Activated CD8-positive, alpha-beta T cell treated with anti-CD3 and anti-CD28 coated beads, Interleukin-2, amount 10 ng/mL, durations not matched to agents 7 days and 5 days (primary cell): ENCODE measurements at regions of chr15 and their contacts with region 1.

Region 1: GRCh38 chr15:89874926-89875564 is 18.7 kb downstream of the AP3S2 start:
- DNase-seq: peak; percentile 88
- ATAC-seq: peak; percentile 100
- H3K4me3 Mint-ChIP-seq: no peak overlapping the region
- H3K27ac Mint-ChIP-seq: peak overlapping the region; percentile 52
- H3K4me1 Mint-ChIP-seq: peaks cover 6% of the 10 kb centered on the region
- H3K27me3 Mint-ChIP-seq: no peaks in the 10 kb centered on the region

Region 2: GRCh38 chr15:89740137-89740536 is 134.9 kb before region 1 on chr15:
- CTCF ChIA-PET with region 1: interaction called, 67 read pairs
- POLR2A ChIA-PET with region 1: no interaction called
- DNase-seq: peak; percentile 79
- ATAC-seq: peak; percentile 90
- H3K4me3 Mint-ChIP-seq: no peak overlapping the region
- H3K27ac Mint-ChIP-seq: no peak overlapping the region
- H3K4me1 Mint-ChIP-seq: peaks cover 2% of the 10 kb centered on the region
- H3K27me3 Mint-ChIP-seq: peaks cover 4% of the 10 kb centered on the region

Region 3: DNA sequence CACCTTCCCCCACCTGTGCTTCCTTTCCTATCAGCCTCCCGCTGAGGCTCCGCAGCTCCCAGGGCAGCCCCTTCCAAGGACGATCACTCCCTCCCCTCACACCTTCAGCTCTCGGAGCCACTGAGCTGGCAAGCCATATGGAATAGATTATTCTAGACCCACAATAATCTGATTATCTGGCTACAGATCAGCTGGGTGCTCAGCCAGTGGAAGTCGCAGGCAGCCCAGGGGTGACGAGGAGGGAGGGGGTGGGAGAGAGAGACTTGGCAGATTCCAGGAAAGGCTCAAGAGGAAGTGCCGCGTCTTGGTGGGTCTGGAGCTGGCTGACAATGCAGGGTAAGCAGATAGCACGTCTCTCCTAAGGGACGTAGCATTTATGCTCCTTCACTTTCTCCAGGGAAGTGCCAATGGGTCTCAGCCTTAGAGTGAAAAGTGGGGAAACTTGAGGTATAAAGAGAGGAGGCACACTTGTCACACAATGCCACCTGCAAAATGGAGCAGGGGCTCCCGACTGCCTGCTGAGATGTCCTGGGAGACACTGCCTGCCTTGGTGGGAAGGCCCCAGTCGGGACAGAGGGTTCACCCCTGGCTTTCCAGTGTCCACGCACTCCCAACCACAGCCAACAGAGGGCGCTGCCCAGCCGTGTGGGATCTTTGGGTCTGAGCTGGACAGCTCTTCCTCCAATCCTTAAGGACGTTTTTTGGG is 114.6 kb before region 1 on chr15:
- CTCF ChIA-PET with region 1: interaction called, 100 read pairs
- POLR2A ChIA-PET with region 1: interaction called, 3 read pairs
- DNase-seq: peak; percentile 76
- ATAC-seq: peak; percentile 84
- H3K4me3 Mint-ChIP-seq: no peak overlapping the region
- H3K27ac Mint-ChIP-seq: no peak overlapping the region
- H3K4me1 Mint-ChIP-seq: peaks cover 5% of the 10 kb centered on the region
- H3K27me3 Mint-ChIP-seq: peaks cover 8% of the 10 kb centered on the region

Region 4: DNA sequence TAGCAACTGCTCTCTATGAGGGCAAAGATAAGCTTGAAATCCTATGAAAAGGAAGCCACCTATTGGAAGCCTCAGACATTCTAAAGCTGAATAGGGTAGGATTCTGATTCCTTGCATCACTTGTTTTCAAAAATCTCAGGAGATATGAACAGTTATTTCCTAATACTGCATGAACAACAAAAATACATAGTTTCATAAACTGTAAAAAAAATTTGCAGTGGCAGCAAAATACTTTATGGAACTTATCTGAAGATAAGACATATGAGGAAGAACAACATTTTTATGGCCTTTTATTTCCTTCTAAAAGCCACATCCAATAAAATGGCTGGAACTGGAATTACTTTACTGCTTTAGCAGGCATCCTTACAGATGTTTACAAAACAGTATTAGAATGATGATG is 11.1 kb before region 1 on chr15:
- CTCF ChIA-PET with region 1: interaction called, 31 read pairs
- POLR2A ChIA-PET with region 1: interaction called, 3 read pairs
- DNase-seq: no peak
- ATAC-seq: no peak
- H3K4me3 Mint-ChIP-seq: no peak overlapping the region
- H3K27ac Mint-ChIP-seq: no peak overlapping the region
- H3K4me1 Mint-ChIP-seq: peaks cover 11% of the 10 kb centered on the region
- H3K27me3 Mint-ChIP-seq: no peaks in the 10 kb centered on the region

Region 5: DNA sequence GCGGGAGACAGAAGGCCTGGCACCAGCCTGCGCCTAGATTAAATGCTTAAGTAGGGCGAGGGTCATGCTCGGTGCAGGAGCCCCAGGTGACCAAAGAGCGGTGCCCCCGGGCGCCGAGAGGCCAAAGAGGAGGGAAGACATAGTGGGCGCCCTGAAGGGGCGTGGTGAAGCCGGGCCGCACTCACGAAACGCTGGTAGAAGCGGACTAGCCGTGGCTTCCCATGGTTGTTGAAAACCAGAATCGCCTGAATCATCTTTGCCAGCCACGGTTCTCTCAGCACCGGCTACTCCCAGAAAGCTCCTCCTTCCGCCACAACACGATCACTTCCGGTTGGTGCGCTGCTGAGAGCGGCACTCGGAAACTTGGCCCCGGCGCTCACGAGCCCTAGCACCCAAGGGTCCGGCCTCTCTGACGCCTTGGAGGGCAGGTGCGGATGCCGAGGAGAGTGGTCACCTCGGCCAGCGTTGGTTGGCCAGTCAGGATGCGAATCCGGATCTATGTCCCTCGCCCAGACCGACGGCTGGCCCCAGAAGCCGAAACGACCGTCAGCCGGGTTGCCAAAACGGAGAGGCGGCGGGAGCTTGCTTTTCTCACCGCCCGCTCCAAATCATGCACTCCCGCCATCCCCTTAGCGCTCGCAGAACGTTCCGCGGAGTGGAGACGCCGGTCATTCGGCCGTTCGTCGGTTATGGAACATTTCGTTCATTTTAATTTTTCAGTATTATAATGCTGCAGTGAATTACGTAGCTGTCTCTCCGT is 18.8 kb after region 1 on chr15 and contains the start of gene AP3S2:
- CTCF ChIA-PET with region 1: interaction called, 32 read pairs
- POLR2A ChIA-PET with region 1: interaction called, 5 read pairs
- DNase-seq: peak; percentile 91
- ATAC-seq: peak; percentile 97
- H3K4me3 Mint-ChIP-seq: peak within 1 kb of the TSS; percentile 92
- H3K27ac Mint-ChIP-seq: peak within 1 kb of the TSS; percentile 92
- H3K4me1 Mint-ChIP-seq: peaks cover 35% of the 10 kb centered on the region
- H3K27me3 Mint-ChIP-seq: peaks cover 2% of the 10 kb centered on the region
- total RNA-seq, gene AP3S2: 24.7 to 25.5 TPM